Motor neuron (in vitro differentiated cells): ENCODE measurements at regions of chr10 and their contacts with region 1.

Region 1: GRCh38 chr10:30783939-30784500 is 154.5 kb upstream of the LYZL2 start:
- ATAC-seq: peak; percentile 38 to 77 (median 68)
- H3K4me3 ChIP-seq: peak overlapping the region; percentile 34 to 53 (median 39)
- H3K27ac ChIP-seq: peak overlapping the region; percentile 4 to 56
- H3K4me1 ChIP-seq: peaks cover 7 to 9% of the 10 kb centered on the region in 2 donors

Region 2: DNA sequence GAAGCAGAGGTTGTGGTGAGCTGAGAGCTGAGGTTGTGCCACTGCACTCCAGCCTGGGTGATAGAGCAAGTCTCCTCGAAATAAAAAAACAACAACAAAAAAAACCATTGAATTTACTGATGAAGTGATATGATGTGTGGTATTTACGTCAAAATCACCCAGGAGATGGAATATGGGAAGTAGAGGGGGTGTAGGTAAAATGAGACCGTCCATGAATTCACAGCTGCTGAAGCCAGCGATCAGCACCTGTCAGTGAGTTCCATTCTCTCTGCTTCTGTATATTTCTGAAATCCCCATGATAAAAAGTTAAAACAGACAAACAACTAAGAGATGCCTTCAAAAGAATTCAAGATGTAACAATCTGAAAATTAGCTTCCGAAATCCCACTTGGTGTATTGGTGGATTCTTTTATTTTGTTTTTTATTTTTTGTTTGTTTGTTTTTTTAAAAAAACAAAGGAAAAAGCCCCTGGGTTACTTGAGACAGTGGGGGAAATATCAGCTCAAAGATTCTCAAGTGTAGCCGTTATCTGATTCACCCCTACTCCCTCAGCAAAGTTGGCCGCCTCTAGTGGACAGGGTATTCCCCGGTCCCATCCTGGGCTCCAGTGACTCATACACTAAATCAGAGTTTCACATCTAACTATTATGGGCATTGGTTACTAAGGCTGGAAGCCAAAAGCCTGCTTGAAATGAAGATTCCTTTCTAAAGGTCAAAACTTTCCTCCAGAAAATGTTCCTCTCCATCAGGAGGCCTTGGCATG is 273.7 kb before region 1 on chr10:
- in situ Hi-C with region 1: no loop called
- ATAC-seq: peak in 3 of 8 experiments; percentile 51 to 91 (median 81)
- H3K4me3 ChIP-seq: no peak overlapping the region
- H3K27ac ChIP-seq: no peak overlapping the region
- H3K4me1 ChIP-seq: no peaks in the 10 kb centered on the region

Region 3: DNA sequence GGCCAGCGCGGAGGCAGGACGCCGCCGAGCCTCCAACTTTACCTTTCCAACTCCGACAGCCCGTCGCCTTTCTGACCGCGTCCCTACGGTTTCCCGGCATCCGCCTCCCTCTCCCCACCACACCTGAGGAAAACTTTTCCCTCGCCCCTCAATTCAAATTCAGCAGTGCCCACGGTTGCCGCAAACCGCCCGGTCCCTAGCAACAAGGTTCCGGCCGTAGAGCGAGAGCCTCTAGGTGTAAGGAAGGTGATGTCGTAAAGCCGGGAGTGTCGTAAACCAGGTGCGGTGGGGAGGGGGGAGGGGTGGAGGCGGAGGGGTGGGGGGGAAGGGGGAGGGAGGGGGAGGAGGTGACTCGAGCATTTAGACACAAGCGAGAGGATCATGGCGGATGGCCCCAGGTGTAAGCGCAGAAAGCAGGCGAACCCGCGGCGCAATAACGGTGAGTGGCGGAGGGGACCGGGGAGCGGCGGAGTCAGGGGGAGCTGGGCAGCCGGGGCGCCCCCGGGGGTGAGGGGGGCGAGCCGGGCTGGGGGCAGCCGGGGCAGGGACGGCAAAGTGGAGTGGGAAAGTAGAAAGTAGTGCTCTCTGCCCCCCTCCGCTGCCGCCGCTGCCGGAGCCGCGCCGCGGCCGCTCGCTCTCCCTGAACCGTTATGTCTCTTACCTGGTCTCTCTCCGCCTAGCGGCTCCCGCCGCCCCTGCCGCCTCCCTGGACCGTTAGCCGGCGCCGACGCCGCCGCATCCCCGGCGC is 535.0 kb after region 1 on chr10 and contains the start of gene ZEB1:
- in situ Hi-C with region 1: loop called in 2 of 9 experiments (anchors 25 kb)
- ATAC-seq: peak; percentile 60 to 82 (median 68)
- H3K4me3 ChIP-seq: peak within 1 kb of the TSS; percentile 88 to 100 (median 99)
- H3K27ac ChIP-seq: peak within 1 kb of the TSS; percentile 75 to 84
- H3K4me1 ChIP-seq: peaks cover 8 to 9% of the 10 kb centered on the region in 2 donors
- total RNA-seq, gene ZEB1: 14.8 to 104 (median 50.3) TPM

Region 4: DNA sequence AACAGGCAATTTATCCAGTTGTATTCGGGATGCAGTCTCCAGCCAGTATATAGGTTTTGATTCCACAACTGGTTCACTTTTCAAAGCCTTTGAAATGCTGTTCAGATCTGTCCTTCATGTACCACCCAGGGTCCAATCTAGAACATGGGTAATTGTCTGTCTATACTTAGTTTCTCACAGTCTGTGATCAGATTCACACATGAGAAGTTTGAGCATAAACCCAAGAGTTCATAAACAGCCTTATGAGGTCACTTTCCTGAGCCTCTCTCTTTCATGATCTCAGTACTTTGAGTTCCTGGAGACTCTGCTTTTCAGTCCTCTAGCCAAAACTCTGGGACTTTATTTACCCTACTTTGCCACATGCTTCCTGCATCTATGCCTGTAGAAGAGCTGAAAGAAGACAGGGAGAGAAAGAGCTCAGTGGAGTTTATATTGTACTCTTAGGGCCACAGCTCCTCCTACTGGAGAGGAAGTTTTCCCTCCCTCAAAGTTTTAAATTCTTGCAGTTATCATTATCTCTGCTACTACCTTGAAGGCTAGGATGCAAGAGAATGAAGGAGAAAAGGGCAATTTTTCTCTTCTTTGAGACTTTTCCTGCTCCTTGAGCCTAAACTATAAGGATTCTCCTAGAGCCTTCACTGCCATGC is 707.0 kb after region 1 on chr10:
- in situ Hi-C with region 1: loop called in 1 of 9 experiments (anchors 25 kb)
- ATAC-seq: peak in 3 of 8 experiments; percentile 59 to 77 (median 71)
- H3K4me3 ChIP-seq: no peak overlapping the region
- H3K27ac ChIP-seq: no peak overlapping the region
- H3K4me1 ChIP-seq: no peaks in the 10 kb centered on the region